H1 (cell line): ENCODE measurements at regions of chr15 and their contacts with region 1.

Region 1: DNA sequence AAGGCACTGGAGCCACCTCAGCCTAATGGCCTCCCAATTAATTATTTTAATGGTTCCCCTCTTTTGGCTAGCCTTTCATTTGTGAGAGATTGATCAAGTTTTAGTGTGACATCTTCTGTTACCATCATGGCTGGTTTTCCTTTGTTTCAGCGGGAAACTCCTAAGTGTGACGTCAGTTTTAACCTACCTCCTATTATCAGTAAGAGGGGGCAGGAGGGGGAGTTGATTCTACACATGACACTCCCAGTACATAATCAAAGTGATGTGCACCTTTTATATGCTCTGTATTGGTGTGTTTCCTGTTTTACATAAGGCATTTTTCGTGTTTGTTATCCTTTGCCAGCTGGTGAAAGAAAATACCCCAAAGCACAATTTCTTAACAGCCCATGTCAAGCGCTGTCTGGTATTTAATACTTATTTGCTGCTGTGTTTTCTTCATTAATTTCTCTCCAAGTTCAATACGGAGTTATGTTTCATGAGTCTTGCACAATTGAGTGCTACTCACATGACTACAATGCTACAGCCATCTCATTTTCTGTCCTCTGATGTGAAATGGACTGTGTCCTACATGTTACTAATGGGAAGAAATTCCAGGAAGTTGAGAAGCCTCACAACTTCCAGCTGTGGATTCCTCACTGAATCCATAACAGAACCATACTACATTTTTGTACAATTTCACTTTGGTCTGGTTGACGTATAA is 52.2 kb upstream of the POLR2M start:
- DNase-seq: no peak
- H3K4me3 ChIP-seq: no peak overlapping the region
- H3K27ac ChIP-seq: no peak overlapping the region
- H3K4me1 ChIP-seq: no peaks in the 10 kb centered on the region
- H3K27me3 ChIP-seq: no peaks in the 10 kb centered on the region
- CTCF ChIP-seq: no peak
- EP300 ChIP-seq: no peak
- POLR2A ChIP-seq: no peak
- RAD21 ChIP-seq: no peak

Region 2: GRCh38 chr15:57667171-57667849 is 13.0 kb after region 1 on chr15:
- CTCF ChIA-PET with region 1: interaction called, 24 read pairs
- POLR2A ChIA-PET with region 1: no interaction called
- DNase-seq: no peak
- H3K4me3 ChIP-seq: no peak overlapping the region
- H3K27ac ChIP-seq: no peak overlapping the region
- H3K4me1 ChIP-seq: no peaks in the 10 kb centered on the region
- H3K27me3 ChIP-seq: no peaks in the 10 kb centered on the region
- CTCF ChIP-seq: peak in 2 of 3 experiments; percentile 15 to 44; a peak in 2 of 4 replicates
- EP300 ChIP-seq: no peak
- POLR2A ChIP-seq: no peak
- RAD21 ChIP-seq: peak; percentile 45 to 57